Activated T-helper 1 cell treated with anti-CD3 and anti-CD28 coated beads, Interleukin-12 subunit alpha, Interleukin-12 subunit beta, Interleukin-2, Interleukin-4 antibody, amounts not matched to agents 30 ng/mL and 10 ng/mL and 1 ng/mL, durations not matched to agents 14 hours and 24 hours and 36 hours (primary cell): ENCODE measurements at regions of chr4 and their contacts with region 1.

Region 1: DNA sequence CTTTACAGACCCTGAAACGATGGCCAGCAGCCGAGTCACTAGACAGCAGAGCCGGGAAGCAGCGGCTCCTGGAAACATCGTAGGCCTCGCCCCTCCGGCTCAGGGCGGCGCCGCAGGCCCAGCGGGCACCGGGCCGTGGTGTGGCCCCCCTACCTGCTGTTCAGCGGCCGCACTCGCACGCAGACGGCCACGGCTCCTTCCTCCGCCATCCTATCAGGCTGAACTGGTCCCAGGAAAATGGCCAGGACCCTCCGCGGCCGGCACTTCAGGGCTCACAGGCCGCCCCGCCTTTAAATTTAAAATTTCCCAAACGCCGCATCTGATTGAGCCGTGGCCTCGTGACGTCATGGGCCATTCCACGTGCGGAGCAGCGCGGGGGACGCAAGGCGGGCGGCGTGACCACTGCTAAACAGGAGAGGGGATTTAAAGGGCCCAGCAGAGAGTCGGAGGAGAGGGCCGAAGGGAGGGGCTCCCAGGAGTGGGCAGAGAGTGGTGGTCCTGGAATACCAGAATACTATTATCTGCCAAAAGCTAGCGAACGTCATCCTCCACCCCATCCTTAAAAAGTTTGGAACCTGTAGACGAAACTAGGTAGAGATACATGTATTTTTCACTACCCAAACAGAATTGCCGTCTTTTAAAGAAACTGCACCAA is at the start of gene CENPE:
- DNase-seq: peak; percentile 85
- H3K4me3 Mint-ChIP-seq: peak within 1 kb of the TSS; percentile 88
- H3K27ac Mint-ChIP-seq: peak within 1 kb of the TSS; percentile 99
- H3K4me1 Mint-ChIP-seq: peaks cover 23% of the 10 kb centered on the region
- H3K27me3 Mint-ChIP-seq: peaks cover 6% of the 10 kb centered on the region
- total RNA-seq, gene CENPE: 18.7 and 22.6 TPM in 2 replicates

Region 2: DNA sequence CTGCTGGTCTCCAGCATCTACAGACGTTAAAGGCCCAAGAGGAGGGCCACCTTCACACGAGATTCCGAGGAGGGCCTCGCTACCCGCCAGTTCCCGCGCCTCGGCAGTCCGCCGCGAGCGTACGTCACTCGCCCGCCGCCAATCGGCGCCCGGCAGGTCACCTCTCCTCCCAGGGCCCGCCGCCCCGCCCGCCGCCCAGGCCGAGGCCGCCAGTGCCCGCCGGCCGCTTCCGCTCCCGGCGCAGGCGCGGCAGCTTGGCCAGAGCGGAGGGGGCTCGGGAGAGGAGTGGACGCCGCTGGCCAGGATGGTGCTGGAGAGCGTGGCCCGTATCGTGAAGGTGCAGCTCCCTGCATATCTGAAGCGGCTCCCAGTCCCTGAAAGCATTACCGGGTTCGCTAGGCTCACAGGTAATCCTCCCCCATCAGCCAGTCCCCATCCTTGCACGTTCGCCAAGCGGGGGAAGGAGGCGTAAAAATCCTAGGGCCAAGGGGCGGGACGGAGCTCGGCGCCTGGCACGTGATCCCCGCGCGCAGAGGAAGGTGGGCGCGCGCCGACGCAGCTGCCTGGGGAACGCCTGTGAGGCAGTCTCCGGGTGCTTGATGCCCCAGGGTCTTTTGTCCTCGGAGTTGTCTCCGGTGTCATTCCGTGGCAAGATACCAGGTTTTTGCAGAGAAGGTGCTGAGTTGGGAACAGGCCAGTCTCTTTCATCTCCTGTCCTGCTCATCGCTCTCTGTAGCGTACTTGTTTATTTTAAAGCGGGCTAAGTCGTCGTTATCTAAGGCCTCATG is 329.3 kb before region 1 on chr4 and contains the start of gene CISD2:
- intact Hi-C with region 1: loop called (anchors 5 kb)
- DNase-seq: peak; percentile 91
- H3K4me3 Mint-ChIP-seq: peak within 1 kb of the TSS; percentile 93
- H3K27ac Mint-ChIP-seq: peak within 1 kb of the TSS; percentile 99
- H3K4me1 Mint-ChIP-seq: peaks cover 69% of the 10 kb centered on the region
- H3K27me3 Mint-ChIP-seq: no peaks in the 10 kb centered on the region
- total RNA-seq, gene CISD2: 41.2 and 50.7 TPM in 2 replicates

Region 3: DNA sequence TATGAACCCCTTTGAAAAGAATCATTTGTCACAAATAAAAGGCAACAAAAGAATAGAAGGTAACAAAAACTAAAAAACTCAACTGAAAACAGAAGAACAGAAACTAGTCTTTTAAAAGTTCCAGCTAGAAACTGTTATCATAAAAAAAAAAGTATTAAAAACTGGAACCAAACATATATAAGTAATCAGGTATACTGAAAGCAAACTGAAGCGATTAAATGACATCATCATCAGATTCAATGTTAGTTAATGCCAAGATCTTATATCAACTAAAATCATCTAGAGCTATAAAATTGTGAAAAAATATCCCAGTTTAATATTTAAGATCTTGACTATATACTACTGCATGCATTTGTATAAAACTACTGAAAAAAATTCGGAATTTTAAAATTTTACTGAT is 36.1 kb before region 1 on chr4:
- intact Hi-C with region 1: loop called (anchors 5 kb)
- DNase-seq: no peak
- H3K4me3 Mint-ChIP-seq: no peak overlapping the region
- H3K27ac Mint-ChIP-seq: no peak overlapping the region
- H3K4me1 Mint-ChIP-seq: peaks cover 10% of the 10 kb centered on the region
- H3K27me3 Mint-ChIP-seq: no peaks in the 10 kb centered on the region

Region 4: DNA sequence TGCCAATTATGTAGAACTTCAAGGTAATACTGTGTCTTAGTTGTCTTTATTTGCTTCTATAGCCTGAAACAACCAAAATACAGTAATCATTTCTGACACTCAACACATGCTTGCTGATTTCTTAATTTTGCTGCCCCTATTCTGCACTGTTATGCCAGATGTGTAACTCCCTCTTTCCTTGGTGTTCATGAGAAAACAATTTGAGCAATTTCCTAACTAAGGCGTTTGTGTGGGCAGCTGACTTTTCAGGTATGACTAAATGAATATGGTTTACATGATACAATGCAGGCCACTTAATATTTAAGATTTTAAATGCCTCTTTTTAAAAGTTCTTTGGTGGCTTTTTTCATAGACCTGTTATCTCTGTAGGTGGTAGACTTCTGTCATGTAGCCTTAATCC is 46.0 kb after region 1 on chr4:
- intact Hi-C with region 1: no loop called
- DNase-seq: no peak
- H3K4me3 Mint-ChIP-seq: no peak overlapping the region
- H3K27ac Mint-ChIP-seq: no peak overlapping the region
- H3K4me1 Mint-ChIP-seq: no peaks in the 10 kb centered on the region
- H3K27me3 Mint-ChIP-seq: peaks cover 2% of the 10 kb centered on the region